Activated CD8-positive, alpha-beta T cell treated with anti-CD3 and anti-CD28 coated beads for 36 hours (primary cell): ENCODE measurements at regions of chr17 and their contacts with region 1.

Region 1: GRCh38 chr17:66386498-66387365 is 84.3 kb downstream of the PRKCA start:
- DNase-seq: no peak
- ATAC-seq: peak; percentile 71
- H3K4me3 Mint-ChIP-seq: no peak overlapping the region
- H3K27ac Mint-ChIP-seq: peak overlapping the region; percentile 78
- H3K4me1 Mint-ChIP-seq: peaks cover 75% of the 10 kb centered on the region
- H3K27me3 Mint-ChIP-seq: no peaks in the 10 kb centered on the region
- CTCF ChIP-seq: no peak

Region 2: GRCh38 chr17:66240630-66241029 is 146.1 kb before region 1 on chr17:
- CTCF ChIA-PET with region 1: no interaction called
- POLR2A ChIA-PET with region 1: no interaction called
- intact Hi-C with region 1: no loop called
- DNase-seq: no peak
- ATAC-seq: no peak
- H3K4me3 Mint-ChIP-seq: no peak overlapping the region
- H3K27ac Mint-ChIP-seq: no peak overlapping the region
- H3K4me1 Mint-ChIP-seq: peaks cover 10% of the 10 kb centered on the region
- H3K27me3 Mint-ChIP-seq: peaks cover 1% of the 10 kb centered on the region
- CTCF ChIP-seq: no peak

Region 3: DNA sequence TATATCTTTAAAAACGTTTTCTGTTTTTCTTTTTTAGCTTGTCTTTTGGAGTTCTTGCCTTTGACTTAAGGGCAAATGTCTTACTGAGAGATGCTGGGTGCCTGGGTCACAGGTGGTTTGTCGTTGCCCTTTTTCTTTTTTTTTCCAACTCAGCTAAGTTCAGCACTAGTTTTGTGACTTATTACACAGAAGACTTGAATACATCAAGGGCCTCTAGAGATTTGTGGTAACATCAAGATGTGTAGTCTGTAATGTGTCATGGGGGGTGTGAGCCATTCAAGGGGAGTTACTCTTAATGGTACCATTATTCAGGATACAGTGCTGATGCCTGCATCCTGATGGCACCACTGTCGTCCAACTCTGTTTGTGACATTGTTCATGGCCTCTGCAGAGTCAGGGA is 10.8 kb after region 1 on chr17:
- CTCF ChIA-PET with region 1: interaction called, 4 read pairs
- POLR2A ChIA-PET with region 1: interaction called, 10 read pairs
- intact Hi-C with region 1: no loop called
- DNase-seq: peak; percentile 54
- ATAC-seq: peak; percentile 69
- H3K4me3 Mint-ChIP-seq: no peak overlapping the region
- H3K27ac Mint-ChIP-seq: peak overlapping the region; percentile 80
- H3K4me1 Mint-ChIP-seq: peaks cover 85% of the 10 kb centered on the region
- H3K27me3 Mint-ChIP-seq: no peaks in the 10 kb centered on the region
- CTCF ChIP-seq: no peak